Ovary (tissue), 10 donors: ENCODE measurements at regions of chr20 and their contacts with region 1.

Region 1: DNA sequence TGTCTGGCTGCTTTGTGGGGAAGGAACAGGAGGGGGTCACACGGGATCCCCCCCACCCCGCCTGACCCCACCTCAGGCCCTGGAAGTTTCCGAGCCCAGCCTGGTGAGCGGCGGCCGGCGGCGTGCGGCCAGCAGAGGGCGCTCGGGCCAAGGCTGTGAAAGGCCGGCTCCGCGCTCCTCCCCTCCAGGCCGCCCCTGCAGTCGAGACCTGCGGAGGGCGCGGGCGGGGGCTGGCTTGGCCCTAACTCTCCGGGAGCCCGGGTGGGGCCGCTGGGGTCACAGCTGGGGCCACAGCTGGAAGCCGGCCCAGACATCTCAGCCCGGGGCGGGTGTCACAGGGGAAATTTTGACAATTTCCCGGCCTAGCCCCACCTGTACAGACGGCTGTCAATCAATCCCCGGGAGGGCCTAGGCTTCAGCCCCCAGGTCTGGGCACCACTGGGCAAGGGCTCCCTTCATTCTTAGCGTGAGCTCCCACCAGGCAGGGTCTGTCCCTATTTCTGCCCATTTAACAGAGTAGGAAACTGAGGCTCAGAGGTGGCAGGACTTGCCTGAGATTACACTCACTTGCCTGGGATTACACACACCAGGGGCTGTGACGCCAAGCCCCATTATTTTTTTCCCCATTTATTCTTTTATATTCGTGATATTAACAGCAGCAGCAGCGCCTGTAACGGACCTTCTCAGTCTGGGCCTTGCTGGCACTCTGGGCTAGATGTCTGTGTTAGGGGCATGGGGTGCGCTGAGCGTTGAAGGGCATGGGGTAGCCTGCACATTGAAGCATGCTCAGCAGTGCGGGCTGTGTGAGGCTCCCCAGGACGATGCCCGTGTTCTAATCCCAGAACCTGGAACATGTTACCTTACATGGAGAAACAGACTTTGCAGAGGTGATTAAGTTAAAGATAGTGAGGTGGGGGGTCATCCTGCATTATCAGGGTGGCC is 23.0 kb downstream of the ZBP1 start:
- DNase-seq: peak; percentile 56 to 85 (median 75)
- H3K4me3 ChIP-seq: no peak overlapping the region
- H3K27ac ChIP-seq: no peak overlapping the region
- H3K4me1 ChIP-seq: peaks cover 2% of the 10 kb centered on the region
- H3K27me3 ChIP-seq: no peaks in the 10 kb centered on the region
- CTCF ChIP-seq: peak; percentile 89 to 95 (median 92)
- EP300 ChIP-seq: no peak
- POLR2A ChIP-seq: no peak

Region 2: DNA sequence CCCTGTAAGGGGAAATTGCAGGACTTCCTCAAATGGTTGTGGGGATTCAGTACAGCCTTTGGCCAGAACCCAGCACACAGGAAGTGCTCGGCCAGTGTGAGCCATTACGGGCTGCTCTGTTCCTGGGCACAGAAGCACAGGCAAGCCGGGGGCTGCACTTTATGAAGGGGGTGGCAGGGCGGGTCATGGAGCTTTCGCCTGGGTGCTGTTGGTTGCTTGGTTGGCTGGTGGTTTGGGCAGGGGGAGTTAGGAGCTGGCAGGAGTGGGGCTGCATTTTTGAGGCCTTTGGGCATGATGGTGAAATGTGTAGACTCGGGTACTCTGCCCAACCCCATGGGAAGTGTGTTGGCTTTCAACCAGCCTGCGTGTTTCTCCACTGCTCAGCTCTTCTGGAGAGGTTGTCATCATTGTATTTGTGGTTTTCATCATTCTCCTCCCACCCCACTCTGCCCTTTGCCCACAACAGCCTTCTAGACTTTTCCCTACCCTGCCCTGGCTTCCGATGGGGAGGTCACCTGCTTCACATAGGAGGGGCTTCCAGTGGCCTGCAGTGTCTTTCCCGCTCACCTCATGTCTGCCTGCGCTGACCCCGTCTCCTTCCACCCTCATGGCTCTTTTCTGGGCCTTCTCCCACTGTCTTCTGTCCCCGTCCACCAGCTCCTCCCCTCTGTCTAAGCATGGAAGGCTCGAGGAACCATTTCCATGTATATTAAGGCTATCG is 222.2 kb before region 1 on chr20:
- intact Hi-C with region 1: loop called in 1 of 4 experiments (anchors 10 kb)
- DNase-seq: no peak
- H3K4me3 ChIP-seq: no peak overlapping the region
- H3K27ac ChIP-seq: no peak overlapping the region
- H3K4me1 ChIP-seq: no peaks in the 10 kb centered on the region
- H3K27me3 ChIP-seq: no peaks in the 10 kb centered on the region
- CTCF ChIP-seq: no peak
- EP300 ChIP-seq: no peak
- POLR2A ChIP-seq: no peak

Region 3: DNA sequence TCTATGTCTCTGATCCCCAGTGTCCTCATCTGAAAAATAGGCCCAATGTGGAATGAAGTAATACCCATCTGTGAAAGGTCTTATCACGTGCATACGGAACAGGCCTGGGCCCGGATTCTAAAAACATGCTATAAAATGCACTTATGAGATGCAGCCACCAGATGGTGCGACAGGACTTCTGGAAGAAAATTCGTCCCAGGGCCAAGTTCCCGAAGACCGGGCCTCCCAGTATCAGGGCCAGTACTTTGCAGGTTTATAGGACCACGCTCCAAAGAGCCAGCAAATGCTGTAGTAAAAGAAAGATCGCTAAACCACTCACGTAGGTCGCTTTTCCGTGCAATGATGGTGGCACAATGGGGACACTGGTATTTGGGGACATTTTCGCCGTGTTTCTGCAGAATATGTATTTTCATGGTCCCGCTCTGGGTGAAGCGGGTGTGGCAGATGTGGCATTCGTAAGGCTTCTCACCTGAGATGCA is 83.0 kb before region 1 on chr20:
- intact Hi-C with region 1: loop called (anchors 1 to 5 kb)
- DNase-seq: peak; percentile 57 to 78 (median 74)
- H3K4me3 ChIP-seq: no peak overlapping the region
- H3K27ac ChIP-seq: no peak overlapping the region
- H3K4me1 ChIP-seq: no peaks in the 10 kb centered on the region
- H3K27me3 ChIP-seq: no peaks in the 10 kb centered on the region
- CTCF ChIP-seq: peak; percentile 31 to 81 (median 63)
- EP300 ChIP-seq: no peak
- POLR2A ChIP-seq: no peak

Region 4: DNA sequence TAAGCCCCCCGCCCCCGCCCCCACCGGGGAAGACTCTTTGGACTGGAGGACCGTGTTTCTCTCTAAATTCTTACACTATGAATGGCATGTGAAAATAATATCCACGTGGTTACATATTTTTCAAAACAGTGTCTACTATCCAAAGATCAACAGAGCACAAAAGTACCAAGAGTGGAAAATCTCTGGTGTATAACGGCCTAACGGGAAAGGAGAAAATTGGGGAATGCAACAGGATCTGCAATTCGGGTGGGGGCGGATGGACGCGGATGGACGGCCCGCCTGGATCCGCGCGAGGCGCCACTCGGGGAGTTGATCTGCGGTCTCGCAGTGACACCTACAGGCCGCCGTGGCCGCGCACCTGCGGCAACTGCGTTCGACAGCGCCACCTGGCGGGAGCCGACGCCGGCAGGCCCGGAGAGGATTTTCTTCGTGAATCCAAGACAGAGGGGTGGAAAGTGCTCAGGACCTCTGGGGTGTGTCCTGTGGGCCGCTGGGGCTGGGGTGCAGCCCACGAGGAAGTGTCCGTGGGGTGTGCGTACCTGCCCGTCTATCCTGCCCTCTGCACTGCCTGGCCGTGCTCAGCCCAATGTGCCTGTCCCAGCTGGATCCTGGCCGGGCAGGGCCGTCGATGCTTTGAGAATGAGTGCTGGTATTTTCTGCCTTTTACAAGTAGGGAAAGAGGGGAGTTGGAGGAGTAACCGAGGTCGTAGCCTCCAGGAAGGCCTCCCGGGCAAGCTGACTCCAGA is 612.6 kb after region 1 on chr20:
- intact Hi-C with region 1: loop called (anchors 1 to 2 kb)
- DNase-seq: peak; percentile 77 to 93 (median 89)
- H3K4me3 ChIP-seq: no peak overlapping the region
- H3K27ac ChIP-seq: no peak overlapping the region
- H3K4me1 ChIP-seq: no peaks in the 10 kb centered on the region
- H3K27me3 ChIP-seq: no peaks in the 10 kb centered on the region
- CTCF ChIP-seq: peak; percentile 100
- EP300 ChIP-seq: no peak
- POLR2A ChIP-seq: no peak